Left ventricle myocardium inferior (tissue), 1 donor: ENCODE measurements at regions of chr4 and their contacts with region 1.

Region 1: DNA sequence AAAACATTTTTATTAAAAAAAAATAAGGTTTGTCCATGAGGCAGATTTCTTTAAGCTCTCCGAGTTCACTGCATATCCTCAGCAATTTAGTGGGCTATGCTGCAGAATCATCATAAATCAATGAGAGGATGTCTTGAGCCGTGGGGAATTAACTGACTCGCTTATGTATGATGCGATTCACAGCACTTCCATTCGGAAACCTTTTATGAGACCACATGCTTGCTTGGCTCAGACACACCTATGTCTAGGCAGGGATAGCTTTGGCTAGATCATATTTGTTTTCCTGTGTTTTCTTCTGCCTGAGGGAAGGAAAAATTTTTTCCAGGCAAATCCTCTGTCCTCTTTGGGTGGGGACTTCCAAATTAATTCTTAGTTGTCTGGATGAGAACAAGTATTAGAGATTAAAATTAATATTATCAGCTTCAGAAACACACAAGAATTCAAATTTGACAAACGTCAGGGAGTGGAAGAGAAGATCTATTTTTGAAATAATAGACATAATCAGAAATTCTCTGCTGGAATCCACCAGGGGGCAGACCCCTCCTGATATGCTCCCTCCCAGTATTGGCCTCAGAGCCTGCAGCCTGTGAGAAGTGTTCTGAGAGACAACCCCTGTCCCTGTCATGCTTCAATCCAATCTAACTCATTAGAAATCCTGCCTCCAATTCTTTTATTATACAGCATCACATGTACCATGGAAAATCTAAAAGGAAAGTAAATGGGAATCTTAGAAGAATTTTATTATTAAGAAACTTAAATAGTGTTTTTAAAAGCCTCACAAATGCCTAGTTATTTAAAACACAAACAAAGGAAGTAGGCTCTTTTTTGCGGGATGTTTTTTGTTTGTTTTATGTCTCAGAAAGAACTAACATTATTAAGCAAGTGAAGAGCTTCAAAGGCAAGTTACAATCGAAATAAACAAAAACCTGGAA is 345.1 kb upstream of the TACR3 start:
- DNase-seq: peak; percentile 15
- H3K4me3 ChIP-seq: no peak overlapping the region
- H3K27ac ChIP-seq: no peak overlapping the region
- H3K4me1 ChIP-seq: no peaks in the 10 kb centered on the region
- H3K27me3 ChIP-seq: no peaks in the 10 kb centered on the region
- CTCF ChIP-seq: peak; percentile 61

Region 2: DNA sequence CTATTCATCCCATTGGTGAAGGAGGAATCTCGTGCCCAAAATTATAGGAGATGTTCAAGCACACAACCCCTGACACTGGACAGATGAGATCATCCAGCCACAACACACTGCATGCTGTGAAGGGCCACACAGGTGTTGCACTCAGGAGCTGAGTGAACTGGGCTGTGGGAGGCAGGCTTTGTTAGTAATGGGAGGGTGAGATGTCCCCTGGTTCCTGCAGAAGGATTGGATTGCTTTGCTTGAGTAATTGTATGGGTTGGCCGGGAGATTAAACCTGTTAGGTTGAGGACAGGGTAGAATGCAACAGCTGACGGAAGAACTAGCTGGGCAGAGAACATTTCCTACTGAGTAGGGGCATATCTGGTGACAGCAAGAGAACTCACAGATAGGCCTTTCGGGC is 497.3 kb before region 1 on chr4:
- intact Hi-C with region 1: no loop called
- DNase-seq: no peak
- H3K4me3 ChIP-seq: no peak overlapping the region
- H3K27ac ChIP-seq: no peak overlapping the region
- H3K4me1 ChIP-seq: no peaks in the 10 kb centered on the region
- H3K27me3 ChIP-seq: no peaks in the 10 kb centered on the region
- CTCF ChIP-seq: no peak

Region 3: DNA sequence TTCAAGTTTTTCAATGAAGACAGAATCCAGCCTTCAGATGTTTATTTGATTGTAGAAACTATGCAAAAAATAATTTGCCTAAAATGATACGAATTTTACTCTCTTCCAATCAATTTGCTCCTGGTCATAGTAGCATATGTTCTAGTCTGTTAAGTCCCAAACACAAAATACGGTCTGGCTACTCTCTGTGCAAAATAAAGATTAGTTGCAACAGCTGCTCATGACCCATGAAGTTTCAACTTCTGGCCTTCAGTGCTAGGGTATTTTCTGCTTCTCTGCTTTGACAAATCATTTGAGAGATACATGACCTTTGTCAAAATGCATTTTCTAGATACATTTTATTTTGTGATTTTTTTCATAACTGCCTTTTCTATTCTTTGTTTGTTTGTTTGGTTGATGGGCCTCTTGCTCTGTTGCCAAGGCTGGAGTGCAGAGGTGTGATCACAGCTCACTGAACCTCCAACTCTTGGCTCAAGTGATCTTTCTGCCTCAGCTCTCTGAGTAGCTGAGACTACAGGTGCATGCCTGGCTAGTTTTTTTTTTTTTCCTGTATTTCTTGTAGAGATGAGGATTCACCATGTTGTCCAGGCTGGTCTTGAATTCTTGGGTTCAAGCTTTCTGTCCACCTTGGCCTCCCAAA is 400.4 kb before region 1 on chr4:
- intact Hi-C with region 1: no loop called
- DNase-seq: no peak
- H3K4me3 ChIP-seq: no peak overlapping the region
- H3K27ac ChIP-seq: no peak overlapping the region
- H3K4me1 ChIP-seq: no peaks in the 10 kb centered on the region
- H3K27me3 ChIP-seq: no peaks in the 10 kb centered on the region
- CTCF ChIP-seq: no peak

Region 4: GRCh38 chr4:104859601-104860237 is 794.8 kb after region 1 on chr4:
- intact Hi-C with region 1: loop called (anchors 10 kb)
- DNase-seq: no peak
- H3K4me3 ChIP-seq: peak overlapping the region; percentile 50
- H3K27ac ChIP-seq: no peak overlapping the region
- H3K4me1 ChIP-seq: peaks cover 18% of the 10 kb centered on the region
- H3K27me3 ChIP-seq: no peaks in the 10 kb centered on the region
- CTCF ChIP-seq: no peak